ENCODE measurements at regions of chr15 and their contacts with region 1.

Region 1: DNA sequence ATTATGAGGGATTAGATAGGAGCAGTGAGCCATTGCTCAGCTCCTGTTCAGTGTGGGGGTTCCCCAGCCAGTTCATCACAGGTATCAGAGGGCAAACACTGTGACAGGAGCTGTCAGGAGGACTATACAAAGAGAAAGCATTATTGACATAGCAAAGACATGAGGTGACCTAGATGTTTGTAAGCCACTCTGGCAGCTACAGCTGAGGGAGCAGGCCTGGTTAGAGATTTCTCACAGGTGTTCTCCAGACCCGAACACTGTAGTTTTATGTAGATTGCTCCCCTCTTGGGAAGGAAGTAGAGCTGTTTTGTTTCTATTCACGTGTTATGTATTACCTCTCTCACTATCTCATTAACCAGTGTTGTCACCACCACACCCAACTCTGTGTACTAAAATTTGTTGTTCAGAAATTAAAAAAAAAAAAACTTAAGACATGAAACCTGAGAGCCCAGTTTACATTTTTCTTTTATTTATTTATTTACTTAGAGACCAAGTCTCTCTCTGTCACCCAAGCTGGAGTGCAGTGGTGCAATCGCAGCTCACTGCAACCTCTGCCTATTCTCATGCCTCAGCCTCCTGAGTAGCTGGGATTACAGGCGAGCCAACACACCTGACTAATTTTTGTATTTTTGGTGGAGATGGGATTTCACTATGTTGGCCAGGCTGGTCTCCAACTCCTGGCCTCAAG is 123.7 kb downstream of the RBPMS2 start:
- DNase-seq: peak; percentile 49
- H3K4me3 Mint-ChIP-seq: no peak overlapping the region
- H3K27ac Mint-ChIP-seq: peak overlapping the region; percentile 88
- H3K4me1 Mint-ChIP-seq: peaks cover 42% of the 10 kb centered on the region
- H3K27me3 Mint-ChIP-seq: no peaks in the 10 kb centered on the region

Region 2: GRCh38 chr15:64426845-64427465 is 224.8 kb before region 1 on chr15:
- CTCF ChIA-PET with region 1: interaction called, 36 read pairs
- DNase-seq: no peak
- H3K4me3 Mint-ChIP-seq: no peak overlapping the region
- H3K27ac Mint-ChIP-seq: peak overlapping the region; percentile 17
- H3K4me1 Mint-ChIP-seq: peaks cover 49% of the 10 kb centered on the region
- H3K27me3 Mint-ChIP-seq: no peaks in the 10 kb centered on the region

Region 3: GRCh38 chr15:64634576-64635498 is 16.9 kb before region 1 on chr15:
- CTCF ChIA-PET with region 1: interaction called, 12 read pairs
- DNase-seq: peak; percentile 33
- H3K4me3 Mint-ChIP-seq: peak overlapping the region; percentile 2
- H3K27ac Mint-ChIP-seq: peak overlapping the region; percentile 70
- H3K4me1 Mint-ChIP-seq: peaks cover 58% of the 10 kb centered on the region
- H3K27me3 Mint-ChIP-seq: no peaks in the 10 kb centered on the region

Measured in activated naive CD4-positive, alpha-beta T cell treated with anti-CD3 and anti-CD28 coated beads, Interleukin-2, amount 10 ng/mL, durations not matched to agents 7 days and 5 days (primary cell).